ENCODE measurements at regions of chr13 and their contacts with region 1.

Region 1: GRCh38 chr13:39095500-39095899 is 57.2 kb downstream of the NHLRC3 start:
- DNase-seq: peak; percentile 57
- H3K4me3 Mint-ChIP-seq: peak overlapping the region; percentile 46
- H3K27ac Mint-ChIP-seq: peak overlapping the region; percentile 96
- H3K4me1 Mint-ChIP-seq: peaks cover 32% of the 10 kb centered on the region
- H3K27me3 Mint-ChIP-seq: no peaks in the 10 kb centered on the region

Region 2: GRCh38 chr13:39037880-39038568 is 57.5 kb before region 1 on chr13 and contains the starts of genes NHLRC3 and PROSER1:
- intact Hi-C with region 1: loop called (anchors 1 kb)
- DNase-seq: peak; percentile 94
- H3K4me3 Mint-ChIP-seq: peak within 1 kb of the TSS; percentile 91
- H3K27ac Mint-ChIP-seq: peak within 1 kb of the TSS; percentile 95
- H3K4me1 Mint-ChIP-seq: peaks cover 48% of the 10 kb centered on the region
- H3K27me3 Mint-ChIP-seq: no peaks in the 10 kb centered on the region
- total RNA-seq, gene NHLRC3: 18.4 and 18.8 TPM in 2 replicates
- total RNA-seq, gene PROSER1: 86.6 and 89.8 TPM in 2 replicates

Region 3: DNA sequence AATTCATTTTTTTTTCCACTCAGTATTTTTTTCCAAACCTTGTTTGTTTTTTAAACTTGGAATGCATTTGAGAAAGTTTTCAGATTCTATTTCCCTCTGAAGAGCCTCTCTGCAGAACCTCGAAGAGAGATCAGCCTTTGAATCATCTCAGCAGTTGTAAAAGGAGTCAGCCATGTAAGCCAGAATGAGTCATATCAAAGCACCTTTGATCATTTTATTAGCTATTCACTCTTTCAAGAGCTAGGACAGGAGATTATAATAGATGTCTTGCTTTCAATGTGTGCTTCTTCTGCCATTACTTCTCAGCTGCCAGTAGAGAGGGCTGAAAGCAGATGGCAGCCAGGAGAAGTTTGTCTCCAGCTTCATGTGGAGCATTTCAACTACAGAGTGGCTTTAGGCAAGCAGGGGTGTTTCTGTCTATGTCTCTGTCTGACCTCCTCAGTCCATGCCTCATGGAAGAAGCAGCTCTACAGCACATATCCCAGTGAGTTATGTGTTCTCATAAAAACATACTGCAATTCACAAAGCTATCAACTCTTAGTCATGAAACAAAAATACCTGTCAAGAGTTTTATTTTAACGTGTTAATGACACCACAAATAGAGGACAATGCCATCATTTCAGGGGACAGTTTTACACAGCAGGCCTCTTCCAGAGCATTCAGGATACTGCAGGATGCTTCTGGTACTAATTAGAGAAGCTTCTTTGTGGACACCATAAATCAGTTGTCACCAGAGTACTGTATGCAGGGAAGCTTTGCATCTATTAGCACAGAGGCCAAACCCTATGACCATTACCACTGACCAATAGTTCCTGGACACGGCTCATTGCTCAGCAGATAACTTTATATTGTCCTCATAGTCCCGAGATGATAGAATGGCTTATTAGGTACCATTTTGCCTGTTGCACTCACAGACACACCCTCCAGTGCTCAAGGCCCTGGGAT is 37.1 kb after region 1 on chr13:
- intact Hi-C with region 1: loop called (anchors 5 kb)
- DNase-seq: no peak
- H3K4me3 Mint-ChIP-seq: no peak overlapping the region
- H3K27ac Mint-ChIP-seq: no peak overlapping the region
- H3K4me1 Mint-ChIP-seq: no peaks in the 10 kb centered on the region
- H3K27me3 Mint-ChIP-seq: peaks cover 7% of the 10 kb centered on the region

Region 4: GRCh38 chr13:39196958-39197646 is 101.6 kb after region 1 on chr13:
- intact Hi-C with region 1: loop called (anchors 1 kb)
- DNase-seq: no peak
- H3K4me3 Mint-ChIP-seq: peak overlapping the region; percentile 36
- H3K27ac Mint-ChIP-seq: peak overlapping the region; percentile 87
- H3K4me1 Mint-ChIP-seq: peaks cover 9% of the 10 kb centered on the region
- H3K27me3 Mint-ChIP-seq: peaks cover 9% of the 10 kb centered on the region